ENCODE measurements at regions of chr11 and their contacts with region 1.

Region 1: DNA sequence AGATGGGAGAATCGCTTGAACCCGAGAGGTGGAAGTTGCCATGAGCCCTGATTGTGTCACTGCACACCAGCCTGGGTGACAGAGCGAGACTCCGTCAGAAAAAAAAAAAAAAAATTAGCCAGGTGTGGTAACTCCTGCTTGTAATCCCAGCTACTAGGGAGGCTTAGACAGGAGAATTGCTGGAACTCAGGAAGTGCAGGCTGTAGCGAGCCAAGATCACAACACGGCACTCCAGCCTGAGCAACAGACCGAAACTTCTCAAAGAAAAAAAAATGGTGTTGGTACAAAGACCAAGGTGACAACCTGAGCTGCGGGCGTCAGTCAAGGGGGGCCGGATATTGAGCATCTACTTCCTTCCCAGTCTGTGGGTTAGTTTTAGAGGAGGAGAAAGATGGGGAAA is 48.4 kb upstream of the HSPA8 start:
- DNase-seq: no peak
- ATAC-seq: peak in 1 of 2 donors; percentile 35
- H3K4me3 ChIP-seq: no peak overlapping the region
- H3K27ac ChIP-seq: no peak overlapping the region
- H3K4me1 ChIP-seq: no peaks in the 10 kb centered on the region
- H3K27me3 ChIP-seq: no peaks in the 10 kb centered on the region

Region 2: DNA sequence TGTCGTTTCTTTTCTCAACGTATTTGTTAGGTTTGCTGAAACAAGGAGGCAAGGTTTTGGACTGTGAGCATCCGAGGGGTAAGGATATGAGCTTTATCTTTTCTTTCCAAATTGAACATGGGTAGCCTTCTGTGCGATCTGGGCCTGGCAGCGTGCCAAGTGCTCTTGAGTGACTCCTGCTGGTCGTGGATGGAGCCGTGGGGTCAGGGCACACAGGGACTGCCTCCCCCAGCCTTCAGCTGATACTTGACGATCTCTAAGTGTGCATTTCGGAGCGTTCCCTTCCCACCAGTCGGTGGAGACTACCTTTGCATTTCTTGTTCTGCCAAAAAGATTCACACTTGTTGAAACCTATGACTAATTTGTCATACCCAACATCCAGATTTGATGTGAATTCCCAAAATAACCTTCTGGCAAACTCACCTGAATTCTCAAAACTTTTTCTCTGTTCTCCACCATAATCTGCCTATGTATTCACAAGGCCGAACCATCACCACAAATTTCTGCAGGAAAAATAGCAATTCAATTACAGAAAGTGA is 124.8 kb after region 1 on chr11:
- intact Hi-C with region 1: loop called in 1 of 4 experiments (anchors 5 kb)
- DNase-seq: peak; percentile 52 to 81 (median 81)
- ATAC-seq: peak; percentile 49 to 63
- H3K4me3 ChIP-seq: no peak overlapping the region
- H3K27ac ChIP-seq: no peak overlapping the region
- H3K4me1 ChIP-seq: peaks cover 6% of the 10 kb centered on the region
- H3K27me3 ChIP-seq: no peaks in the 10 kb centered on the region

Region 3: GRCh38 chr11:123246749-123247495 is 136.6 kb after region 1 on chr11:
- intact Hi-C with region 1: loop called (anchors 2 to 5 kb)
- DNase-seq: peak; percentile 80 to 93 (median 90)
- ATAC-seq: peak; percentile 80 to 85
- H3K4me3 ChIP-seq: no peak overlapping the region
- H3K27ac ChIP-seq: no peak overlapping the region
- H3K4me1 ChIP-seq: peaks cover 2% of the 10 kb centered on the region
- H3K27me3 ChIP-seq: no peaks in the 10 kb centered on the region